ENCODE measurements at regions of chr9 and their contacts with region 1.

Region 1: GRCh38 chr9:33698267-33698666 is 97.1 kb upstream of the PRSS3 start:
- DNase-seq: no peak
- ATAC-seq: no peak
- H3K4me3 ChIP-seq: no peak overlapping the region
- H3K27ac ChIP-seq: no peak overlapping the region
- H3K4me1 ChIP-seq: no peaks in the 10 kb centered on the region
- H3K27me3 ChIP-seq: peaks cover 10% of the 10 kb centered on the region
- CTCF ChIP-seq: no peak
- POLR2A ChIP-seq: no peak
- RAD21 ChIP-seq: no peak

Region 2: DNA sequence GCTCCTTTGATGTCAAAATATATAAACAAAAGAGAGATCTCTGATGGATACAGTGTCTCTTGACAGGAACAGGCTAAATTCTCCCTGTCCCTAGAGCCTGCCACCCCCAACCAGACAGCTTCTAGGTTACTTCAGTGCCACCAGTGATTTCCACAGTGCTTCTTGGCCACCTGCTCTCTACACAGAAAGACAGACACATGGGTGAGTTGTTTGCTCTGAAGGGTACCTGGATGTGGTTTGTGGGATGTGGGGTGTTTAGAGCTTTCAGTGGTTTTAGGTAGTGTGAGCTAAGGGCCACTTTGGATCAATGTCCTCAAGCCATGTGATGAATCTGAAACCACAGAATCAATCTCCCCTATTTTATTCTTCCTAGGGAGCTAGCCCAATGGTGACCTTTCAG is 48.8 kb before region 1 on chr9:
- CTCF ChIA-PET with region 1: no interaction called
- POLR2A ChIA-PET with region 1: no interaction called
- dilution Hi-C with region 1: no loop called
- in situ Hi-C with region 1: no loop called
- intact Hi-C with region 1: loop called (anchors 5 kb)
- DNase-seq: no peak
- ATAC-seq: no peak
- H3K4me3 ChIP-seq: no peak overlapping the region
- H3K27ac ChIP-seq: no peak overlapping the region
- H3K4me1 ChIP-seq: no peaks in the 10 kb centered on the region
- H3K27me3 ChIP-seq: peaks cover 56% of the 10 kb centered on the region
- CTCF ChIP-seq: no peak
- POLR2A ChIP-seq: no peak
- RAD21 ChIP-seq: no peak